Activated CD4-positive, alpha-beta T cell treated with anti-CD3 and anti-CD28 coated beads for 36 hours (primary cell): ENCODE measurements at regions of chr17 and their contacts with region 1.

Region 1: DNA sequence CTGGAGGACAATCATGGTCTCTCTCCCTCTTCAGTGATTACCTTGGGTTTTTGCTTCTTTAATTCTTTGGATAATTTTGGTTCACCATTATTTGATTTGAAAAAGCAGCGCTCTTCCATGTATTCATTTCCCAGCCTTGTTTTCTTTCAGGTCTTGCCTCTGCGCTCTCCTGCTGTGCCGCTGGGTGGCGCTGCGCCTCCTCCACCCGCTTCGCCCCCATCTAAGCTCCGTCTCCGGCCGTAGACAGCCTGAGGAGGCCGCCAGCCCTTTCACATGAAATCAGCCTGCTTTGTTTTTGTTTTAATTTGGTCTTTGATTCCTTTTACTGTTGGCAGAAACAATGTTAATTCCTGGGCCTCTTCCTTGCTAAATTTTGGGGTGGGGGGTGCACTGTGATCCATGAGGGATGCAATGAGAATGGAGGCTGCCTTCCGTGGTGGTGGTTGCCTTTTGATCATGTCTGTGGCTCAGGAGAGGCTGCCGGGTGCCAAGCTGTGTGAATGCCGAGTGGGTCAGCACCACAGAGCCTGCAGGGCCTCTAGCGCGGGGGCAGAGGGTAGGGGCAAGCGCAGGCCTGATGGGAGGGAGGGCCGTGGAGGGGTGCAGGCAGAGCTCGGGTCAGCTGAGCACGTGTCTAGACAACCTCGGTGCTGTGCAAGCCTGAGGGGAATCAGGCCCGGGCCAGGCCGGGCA is 64.1 kb downstream of the PLD6 start:
- DNase-seq: peak; percentile 76
- ATAC-seq: peak; percentile 59
- H3K4me3 Mint-ChIP-seq: no peak overlapping the region
- H3K27ac Mint-ChIP-seq: peak overlapping the region; percentile 72
- H3K4me1 Mint-ChIP-seq: peaks cover 17% of the 10 kb centered on the region
- H3K27me3 Mint-ChIP-seq: no peaks in the 10 kb centered on the region

Region 2: DNA sequence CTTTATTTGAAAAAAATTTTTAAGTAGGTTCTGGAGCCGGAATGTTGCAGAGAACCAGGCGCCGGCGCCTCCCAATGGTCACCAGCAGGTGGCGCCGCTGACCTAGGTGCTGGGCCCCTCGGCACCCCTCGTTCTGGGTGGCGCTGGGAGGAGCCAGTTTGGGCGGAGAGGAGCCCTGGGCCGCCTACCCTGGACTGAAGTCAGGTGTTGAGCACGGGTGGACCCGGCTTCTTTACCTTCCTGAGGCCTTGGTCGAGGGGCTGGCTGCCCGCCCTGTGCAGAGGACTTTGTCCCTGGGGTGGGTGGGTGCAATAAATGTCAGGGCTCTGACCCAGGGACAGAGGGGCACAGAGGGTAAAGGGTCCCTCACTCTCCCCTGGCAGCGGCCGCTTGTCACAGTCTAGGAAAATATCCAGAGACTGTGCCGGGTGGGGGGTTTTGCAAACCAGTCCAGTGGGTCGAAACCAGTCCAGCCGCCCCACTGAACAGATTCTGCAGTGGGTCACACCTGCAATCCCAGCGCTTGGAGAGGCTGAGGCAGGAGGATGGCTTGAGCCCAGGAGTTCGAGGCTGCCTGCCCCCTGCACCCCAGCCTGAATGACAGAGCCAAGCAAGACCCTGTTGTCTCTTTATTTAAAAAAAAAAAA is 140.0 kb before region 1 on chr17:
- CTCF ChIA-PET with region 1: interaction called, 3 read pairs
- POLR2A ChIA-PET with region 1: no interaction called
- intact Hi-C with region 1: loop called (anchors 1 to 5 kb)
- DNase-seq: peak; percentile 88
- ATAC-seq: peak; percentile 98
- H3K4me3 Mint-ChIP-seq: no peak overlapping the region
- H3K27ac Mint-ChIP-seq: no peak overlapping the region
- H3K4me1 Mint-ChIP-seq: no peaks in the 10 kb centered on the region
- H3K27me3 Mint-ChIP-seq: no peaks in the 10 kb centered on the region

Region 3: GRCh38 chr17:17303010-17303846 is 161.2 kb after region 1 on chr17 and contains the start of gene NT5M:
- CTCF ChIA-PET with region 1: no interaction called
- POLR2A ChIA-PET with region 1: no interaction called
- intact Hi-C with region 1: loop called in 1 of 2 experiments (anchors 10 kb)
- DNase-seq: peak; percentile 84
- ATAC-seq: peak; percentile 58
- H3K4me3 Mint-ChIP-seq: peak within 1 kb of the TSS; percentile 71
- H3K27ac Mint-ChIP-seq: peak within 1 kb of the TSS; percentile 87
- H3K4me1 Mint-ChIP-seq: peaks cover 28% of the 10 kb centered on the region
- H3K27me3 Mint-ChIP-seq: no peaks in the 10 kb centered on the region
- total RNA-seq, gene NT5M: 4.3 to 5.4 TPM

Region 4: GRCh38 chr17:17313350-17313991 is 171.5 kb after region 1 on chr17:
- CTCF ChIA-PET with region 1: interaction called, 3 read pairs
- POLR2A ChIA-PET with region 1: no interaction called
- intact Hi-C with region 1: loop called (anchors 1 to 10 kb)
- DNase-seq: peak; percentile 85
- ATAC-seq: peak; percentile 100
- H3K4me3 Mint-ChIP-seq: no peak overlapping the region
- H3K27ac Mint-ChIP-seq: no peak overlapping the region
- H3K4me1 Mint-ChIP-seq: peaks cover 6% of the 10 kb centered on the region
- H3K27me3 Mint-ChIP-seq: no peaks in the 10 kb centered on the region